Activated B cell treated with CpG ODN at 0.5 μM for 24 hours (primary cell): ENCODE measurements at regions of chr21 and their contacts with region 1.

Region 1: DNA sequence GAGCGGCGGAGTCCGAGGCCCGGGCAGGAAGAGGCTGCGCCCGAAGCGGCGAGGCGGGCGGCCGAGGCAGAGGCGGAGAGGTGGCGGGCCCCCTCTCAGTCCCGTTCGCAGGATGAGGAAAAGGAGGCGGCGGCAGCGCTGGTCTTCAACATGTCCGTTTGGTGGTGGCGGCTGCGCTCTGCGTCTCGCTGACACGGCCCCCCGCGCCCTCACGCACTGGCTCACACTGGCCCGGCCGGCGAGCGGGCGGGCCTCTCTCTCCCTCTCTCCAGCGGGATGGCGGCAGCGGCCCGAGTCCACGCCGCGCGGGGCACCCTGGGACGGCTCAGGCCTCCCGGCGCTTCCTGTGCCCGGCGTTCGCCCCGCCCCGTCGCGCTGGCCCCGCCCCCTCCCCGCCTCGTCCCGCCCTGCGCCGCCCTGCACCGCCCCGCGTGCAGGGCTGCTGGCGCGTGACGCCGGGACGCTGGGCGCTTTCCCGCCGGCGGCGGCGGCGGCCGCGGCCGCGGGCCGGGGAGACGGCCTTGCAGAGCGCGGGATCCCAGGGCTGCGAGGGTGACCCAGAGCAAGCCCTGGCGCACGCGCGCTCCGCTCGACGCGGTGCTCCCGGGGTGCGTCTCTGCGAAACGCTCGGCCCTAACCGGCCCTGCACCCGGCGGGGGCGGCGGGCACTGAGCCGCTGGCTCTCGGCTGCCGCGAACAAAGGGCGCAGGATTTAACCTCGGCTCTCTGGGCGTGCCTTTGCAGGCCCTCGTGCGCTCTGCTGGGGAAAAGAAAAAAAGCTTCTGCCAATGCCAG is at the start of gene SCAF4:
- DNase-seq: peak; percentile 82
- ATAC-seq: peak; percentile 84
- H3K4me3 Mint-ChIP-seq: no peak within 1 kb of the TSS
- H3K27ac Mint-ChIP-seq: peak within 1 kb of the TSS; percentile 84
- H3K4me1 Mint-ChIP-seq: peaks cover 21% of the 10 kb centered on the region
- H3K27me3 Mint-ChIP-seq: no peaks in the 10 kb centered on the region
- CTCF ChIP-seq: no peak
- total RNA-seq, gene SCAF4: 71.6 and 80.5 TPM in 2 replicates

Region 2: DNA sequence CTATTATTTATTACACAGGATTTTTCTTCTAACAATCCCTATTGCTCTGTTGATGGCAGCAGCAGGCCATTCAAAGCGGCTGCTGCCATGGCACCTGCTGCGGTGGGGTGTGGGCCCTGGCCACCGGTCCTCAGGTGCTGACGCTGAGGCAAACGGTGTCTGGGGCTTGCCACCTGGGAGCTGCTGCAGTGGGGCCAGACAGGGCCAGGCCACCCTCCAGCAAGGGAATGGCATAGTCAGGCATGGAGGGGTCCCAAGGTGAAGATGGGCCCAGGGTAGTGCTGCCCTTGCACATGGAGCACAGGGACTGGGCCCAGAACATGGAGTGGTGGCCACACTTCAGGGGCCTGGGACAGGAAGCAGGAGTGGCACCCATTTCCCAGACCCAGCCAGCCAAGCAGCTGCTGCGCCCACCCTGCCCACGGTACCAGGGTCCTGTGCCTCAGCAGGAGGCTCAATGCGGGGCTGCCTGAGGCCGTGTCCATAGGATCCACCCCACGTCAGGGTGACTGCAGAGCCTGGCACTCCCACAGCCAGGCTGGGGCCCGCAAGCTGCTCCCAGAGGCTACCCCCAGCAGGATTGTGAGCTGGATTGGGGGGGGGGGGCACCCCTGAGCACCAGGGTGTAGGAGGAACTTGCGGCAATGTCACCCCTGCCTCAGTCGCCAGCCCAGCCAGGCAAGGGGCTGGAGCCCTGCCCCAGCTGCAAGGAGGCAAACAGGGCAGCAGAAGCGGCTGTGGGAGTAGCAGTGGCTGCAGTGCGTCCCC is 796.7 kb before region 1 on chr21:
- CTCF ChIA-PET with region 1: no interaction called
- POLR2A ChIA-PET with region 1: no interaction called
- intact Hi-C with region 1: no loop called
- DNase-seq: no peak
- ATAC-seq: no peak
- H3K4me3 Mint-ChIP-seq: no peak overlapping the region
- H3K27ac Mint-ChIP-seq: no peak overlapping the region
- H3K4me1 Mint-ChIP-seq: no peaks in the 10 kb centered on the region
- H3K27me3 Mint-ChIP-seq: no peaks in the 10 kb centered on the region
- CTCF ChIP-seq: no peak

Region 3: DNA sequence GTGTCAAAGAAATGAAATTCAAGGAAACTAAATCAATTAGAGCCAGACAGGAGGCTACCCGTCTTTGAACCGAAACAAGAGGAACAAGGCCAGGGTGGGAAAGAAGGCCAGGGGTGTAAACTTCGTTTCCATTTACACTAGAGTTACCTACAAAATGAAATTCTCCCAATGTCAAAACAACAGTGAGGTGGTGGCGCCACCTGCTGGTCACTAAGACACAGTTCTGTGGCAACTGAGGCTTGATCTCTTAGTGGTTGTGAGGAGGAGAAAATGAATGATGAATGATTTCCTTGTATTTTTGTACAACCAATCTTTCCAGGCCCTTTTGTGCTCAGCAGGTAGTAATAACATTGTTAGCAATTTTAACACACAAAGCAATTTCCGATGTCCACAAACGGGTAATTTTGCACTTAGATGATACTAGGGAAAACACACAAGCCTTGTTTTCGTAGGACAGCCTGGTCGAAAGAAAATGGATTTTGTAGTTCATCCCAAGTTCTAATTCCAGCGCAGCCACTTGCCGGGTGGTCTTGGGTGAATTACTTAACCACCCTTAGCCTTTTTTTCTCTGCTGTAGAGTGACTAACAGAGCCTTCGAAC is 127.3 kb before region 1 on chr21:
- CTCF ChIA-PET with region 1: no interaction called
- POLR2A ChIA-PET with region 1: no interaction called
- intact Hi-C with region 1: no loop called
- DNase-seq: peak; percentile 33
- ATAC-seq: peak; percentile 52
- H3K4me3 Mint-ChIP-seq: no peak overlapping the region
- H3K27ac Mint-ChIP-seq: no peak overlapping the region
- H3K4me1 Mint-ChIP-seq: peaks cover 2% of the 10 kb centered on the region
- H3K27me3 Mint-ChIP-seq: peaks cover 9% of the 10 kb centered on the region
- CTCF ChIP-seq: no peak

Region 4: GRCh38 chr21:31659536-31660258 is 72.3 kb before region 1 on chr21 and contains the start of gene SOD1:
- CTCF ChIA-PET with region 1: no interaction called
- POLR2A ChIA-PET with region 1: interaction called, 3 read pairs
- intact Hi-C with region 1: loop called (anchors 1 kb)
- DNase-seq: peak; percentile 93
- ATAC-seq: peak; percentile 97
- H3K4me3 Mint-ChIP-seq: peak within 1 kb of the TSS; percentile 99
- H3K27ac Mint-ChIP-seq: peak within 1 kb of the TSS; percentile 96
- H3K4me1 Mint-ChIP-seq: peaks cover 65% of the 10 kb centered on the region
- H3K27me3 Mint-ChIP-seq: no peaks in the 10 kb centered on the region
- CTCF ChIP-seq: no peak
- total RNA-seq, gene SOD1: 107 and 131 TPM in 2 replicates

Region 5: DNA sequence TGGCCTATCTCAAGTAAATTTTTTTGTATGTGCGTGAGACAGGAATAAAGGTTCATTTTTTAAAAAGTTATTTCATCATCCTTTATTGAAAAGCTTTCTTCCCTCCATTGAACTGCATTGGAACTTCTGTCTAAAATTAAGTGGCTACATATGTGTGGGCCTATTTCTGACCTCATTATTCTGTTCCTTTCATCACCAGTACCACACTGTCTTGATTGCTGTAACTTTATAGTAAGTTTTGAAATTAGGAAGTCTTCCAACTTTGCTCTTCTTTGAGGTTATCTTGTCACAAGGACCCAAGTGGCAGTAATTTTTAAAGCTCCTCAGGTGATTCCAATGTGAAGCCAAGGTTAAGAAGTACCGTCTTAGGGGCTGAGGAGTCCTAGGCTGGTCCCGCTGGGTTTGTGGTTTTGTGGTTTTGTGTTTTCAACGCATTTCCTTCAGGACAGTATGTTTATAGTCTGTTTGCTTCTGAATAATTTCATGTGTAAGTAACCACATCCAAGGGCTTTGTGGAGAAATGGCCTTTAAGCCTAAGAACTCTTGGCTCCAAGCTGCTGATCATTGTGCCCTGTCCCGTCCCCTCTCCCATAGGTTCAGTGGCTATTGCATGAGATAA is 12.3 kb after region 1 on chr21:
- CTCF ChIA-PET with region 1: interaction called, 3 read pairs
- POLR2A ChIA-PET with region 1: interaction called, 4 read pairs
- intact Hi-C with region 1: loop called (anchors 1 kb)
- DNase-seq: no peak
- ATAC-seq: peak; percentile 18
- H3K4me3 Mint-ChIP-seq: peak overlapping the region; percentile 11
- H3K27ac Mint-ChIP-seq: peak overlapping the region; percentile 41
- H3K4me1 Mint-ChIP-seq: peaks cover 29% of the 10 kb centered on the region
- H3K27me3 Mint-ChIP-seq: no peaks in the 10 kb centered on the region
- CTCF ChIP-seq: no peak

Region 6: GRCh38 chr21:31873696-31874599 is 141.9 kb after region 1 on chr21:
- CTCF ChIA-PET with region 1: no interaction called
- POLR2A ChIA-PET with region 1: interaction called, 3 read pairs
- intact Hi-C with region 1: loop called (anchors 1 kb)
- DNase-seq: peak; percentile 53
- ATAC-seq: peak; percentile 63
- H3K4me3 Mint-ChIP-seq: peak overlapping the region; percentile 66
- H3K27ac Mint-ChIP-seq: no peak overlapping the region
- H3K4me1 Mint-ChIP-seq: peaks cover 8% of the 10 kb centered on the region
- H3K27me3 Mint-ChIP-seq: peaks cover 47% of the 10 kb centered on the region
- CTCF ChIP-seq: no peak

Region 7: GRCh38 chr21:32612075-32612998 is 880.3 kb after region 1 on chr21 and contains the start of gene CFAP298:
- CTCF ChIA-PET with region 1: no interaction called
- POLR2A ChIA-PET with region 1: interaction called, 4 read pairs
- intact Hi-C with region 1: loop called (anchors 5 kb)
- DNase-seq: peak; percentile 83
- ATAC-seq: peak; percentile 89
- H3K4me3 Mint-ChIP-seq: peak within 1 kb of the TSS; percentile 97
- H3K27ac Mint-ChIP-seq: peak within 1 kb of the TSS; percentile 96
- H3K4me1 Mint-ChIP-seq: peaks cover 12% of the 10 kb centered on the region
- H3K27me3 Mint-ChIP-seq: no peaks in the 10 kb centered on the region
- CTCF ChIP-seq: no peak
- total RNA-seq, gene CFAP298: 36.4 and 37.3 TPM in 2 replicates